ENCODE measurements at regions of chr6 and their contacts with region 1.

Region 1: DNA sequence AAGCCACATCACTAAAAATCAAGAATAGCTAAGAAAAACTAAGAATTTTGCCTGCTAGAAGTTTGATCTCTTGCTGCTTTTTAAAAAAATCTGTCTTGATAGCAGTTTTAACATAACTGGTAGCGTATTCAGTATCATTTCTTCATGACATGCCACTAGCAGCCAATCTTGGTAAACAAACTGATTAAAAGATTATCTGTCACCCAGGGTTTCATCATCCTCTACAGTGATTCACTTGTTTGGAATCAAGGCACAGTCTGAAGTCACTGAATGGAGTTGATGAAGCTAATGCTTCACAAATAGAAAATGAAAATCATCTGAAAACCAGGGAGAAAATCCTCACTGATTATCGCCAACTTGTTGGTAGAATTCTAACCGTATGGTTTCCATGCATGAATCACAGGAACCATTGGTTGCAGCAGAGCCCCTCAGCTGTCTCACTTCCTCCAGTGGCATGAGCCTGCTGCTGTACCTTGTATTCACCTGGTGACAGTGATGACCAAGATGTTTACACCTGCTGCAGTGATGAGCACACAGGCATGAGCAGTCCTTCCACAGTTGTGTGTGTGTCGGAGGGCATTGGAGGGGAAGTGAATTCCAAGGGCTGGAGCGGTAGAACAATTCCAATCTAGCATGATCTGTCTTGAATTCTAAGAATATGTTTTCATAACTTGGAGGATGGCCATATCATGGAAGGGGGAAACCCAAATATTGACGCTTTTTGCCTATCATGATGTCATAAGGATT is 275.0 kb downstream of the KHDC1L start:
- DNase-seq: peak; percentile 40 to 87
- H3K4me3 ChIP-seq: peak overlapping the region; percentile 34
- H3K27ac ChIP-seq: peak overlapping the region; percentile 75
- H3K4me1 ChIP-seq: peaks cover 46% of the 10 kb centered on the region
- H3K27me3 ChIP-seq: no peaks in the 10 kb centered on the region
- CTCF ChIP-seq: no peak

Region 2: DNA sequence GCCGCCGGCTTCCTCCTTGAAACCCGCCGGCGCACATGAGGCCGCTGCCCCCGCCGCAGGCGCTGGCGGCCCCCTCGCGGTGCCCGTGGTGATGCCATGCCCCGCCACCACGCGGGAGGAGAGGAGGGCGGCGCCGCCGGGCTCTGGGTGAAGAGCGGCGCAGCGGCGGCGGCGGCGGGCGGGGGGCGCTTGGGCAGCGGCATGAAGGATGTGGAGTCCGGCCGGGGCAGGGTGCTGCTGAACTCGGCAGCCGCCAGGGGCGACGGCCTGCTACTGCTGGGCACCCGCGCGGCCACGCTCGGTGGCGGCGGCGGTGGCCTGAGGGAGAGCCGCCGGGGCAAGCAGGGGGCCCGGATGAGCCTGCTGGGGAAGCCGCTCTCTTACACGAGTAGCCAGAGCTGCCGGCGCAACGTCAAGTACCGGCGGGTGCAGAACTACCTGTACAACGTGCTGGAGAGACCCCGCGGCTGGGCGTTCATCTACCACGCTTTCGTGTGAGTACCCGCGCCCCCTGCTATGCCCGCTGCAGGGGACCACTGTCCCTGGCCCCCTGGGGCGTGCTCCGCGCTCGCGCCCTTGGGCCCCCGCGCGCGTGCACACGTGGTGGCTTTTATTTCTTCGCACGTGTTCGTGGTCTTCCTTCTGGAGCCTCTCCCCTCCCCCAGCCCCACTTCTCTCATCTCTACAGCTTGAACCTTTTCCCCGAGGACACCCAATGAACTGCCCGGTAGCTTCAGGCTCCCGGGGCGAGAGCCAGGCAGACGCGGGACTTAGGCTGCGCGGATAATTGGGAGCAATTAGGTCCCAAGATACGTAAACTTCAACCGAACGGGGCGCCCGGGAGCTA is 328.0 kb before region 1 on chr6:
- CTCF ChIA-PET with region 1: no interaction called
- POLR2A ChIA-PET with region 1: no interaction called
- intact Hi-C with region 1: loop called (anchors 1 kb)
- DNase-seq: peak in 1 of 2 experiments; percentile 45
- H3K4me3 ChIP-seq: peak overlapping the region; percentile 61
- H3K27ac ChIP-seq: no peak overlapping the region
- H3K4me1 ChIP-seq: no peaks in the 10 kb centered on the region
- H3K27me3 ChIP-seq: no peaks in the 10 kb centered on the region
- CTCF ChIP-seq: no peak

Region 3: DNA sequence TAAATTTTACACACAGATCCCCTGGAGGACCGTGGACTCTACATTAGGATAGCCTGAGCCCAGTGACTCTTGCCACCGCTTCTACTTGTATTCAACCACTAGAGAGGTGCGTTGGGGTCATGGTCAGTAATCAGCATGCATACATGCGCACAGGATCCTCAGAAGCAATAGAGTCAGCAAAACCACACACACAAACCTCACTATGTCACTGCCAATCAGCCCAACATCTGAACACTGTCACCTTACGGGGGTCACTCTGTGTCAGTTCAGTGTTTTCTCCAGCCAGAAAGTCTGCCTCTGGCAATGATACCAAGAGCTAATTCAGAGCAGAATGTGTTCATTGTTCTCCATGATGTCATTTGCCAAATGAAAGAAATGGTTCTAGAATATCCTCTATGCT is 49.7 kb after region 1 on chr6:
- CTCF ChIA-PET with region 1: no interaction called
- POLR2A ChIA-PET with region 1: no interaction called
- intact Hi-C with region 1: loop called (anchors 5 kb)
- DNase-seq: peak in 1 of 2 experiments; percentile 26
- H3K4me3 ChIP-seq: no peak overlapping the region
- H3K27ac ChIP-seq: no peak overlapping the region
- H3K4me1 ChIP-seq: no peaks in the 10 kb centered on the region
- H3K27me3 ChIP-seq: no peaks in the 10 kb centered on the region
- CTCF ChIP-seq: no peak

Region 4: GRCh38 chr6:73129653-73130443 is 179.6 kb after region 1 on chr6:
- CTCF ChIA-PET with region 1: no interaction called
- POLR2A ChIA-PET with region 1: no interaction called
- intact Hi-C with region 1: loop called (anchors 5 kb)
- DNase-seq: peak; percentile 77 to 87
- H3K4me3 ChIP-seq: no peak overlapping the region
- H3K27ac ChIP-seq: no peak overlapping the region
- H3K4me1 ChIP-seq: no peaks in the 10 kb centered on the region; the same call in 1 of the 2 replicates
- H3K27me3 ChIP-seq: no peaks in the 10 kb centered on the region
- CTCF ChIP-seq: peak; percentile 97